ENCODE measurements at regions of chr19 and their contacts with region 1.

Region 1: GRCh38 chr19:20414127-20414526 is 151.5 kb downstream of the ZNF737 start:
- ATAC-seq: peak in 2 of 8 experiments; percentile 28 to 86
- H3K4me3 ChIP-seq: no peak overlapping the region
- H3K27ac ChIP-seq: no peak overlapping the region
- H3K4me1 ChIP-seq: no peaks in the 10 kb centered on the region

Region 2: DNA sequence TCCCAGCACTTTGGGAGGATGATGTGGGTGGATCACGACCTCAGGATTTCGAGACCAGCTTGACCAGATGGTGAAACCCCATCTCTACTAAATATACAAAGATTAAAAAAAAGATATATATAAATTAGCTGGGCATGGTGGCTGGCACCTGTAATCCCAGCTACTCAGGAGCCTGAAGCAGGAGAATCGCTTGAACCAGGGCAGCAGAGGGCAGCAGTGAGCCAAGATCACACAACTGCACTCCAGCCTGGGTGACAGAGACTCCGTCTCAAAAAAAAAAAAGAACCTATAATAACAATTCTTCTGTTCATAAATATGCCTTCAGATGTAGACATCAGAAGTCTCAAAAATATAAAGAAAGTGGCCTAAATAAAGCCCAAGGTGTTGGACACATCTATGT is 143.9 kb after region 1 on chr19:
- in situ Hi-C with region 1: loop called in 1 of 9 experiments (anchors 10 kb)
- ATAC-seq: no peak
- H3K4me3 ChIP-seq: no peak overlapping the region
- H3K27ac ChIP-seq: no peak overlapping the region
- H3K4me1 ChIP-seq: no peaks in the 10 kb centered on the region